GM10248 (cell line): ENCODE measurements at regions of chr7 and their contacts with region 1.

Region 1: GRCh38 chr7:21412410-21412851 is 15.5 kb upstream of the SP4 start:
- DNase-seq: peak; percentile 49
- CTCF ChIP-seq: no peak

Region 2: GRCh38 chr7:21400598-21400997 is 11.8 kb before region 1 on chr7:
- CTCF ChIA-PET with region 1: interaction called, 10 read pairs
- POLR2A ChIA-PET with region 1: no interaction called
- DNase-seq: no peak
- CTCF ChIP-seq: no peak

Region 3: DNA sequence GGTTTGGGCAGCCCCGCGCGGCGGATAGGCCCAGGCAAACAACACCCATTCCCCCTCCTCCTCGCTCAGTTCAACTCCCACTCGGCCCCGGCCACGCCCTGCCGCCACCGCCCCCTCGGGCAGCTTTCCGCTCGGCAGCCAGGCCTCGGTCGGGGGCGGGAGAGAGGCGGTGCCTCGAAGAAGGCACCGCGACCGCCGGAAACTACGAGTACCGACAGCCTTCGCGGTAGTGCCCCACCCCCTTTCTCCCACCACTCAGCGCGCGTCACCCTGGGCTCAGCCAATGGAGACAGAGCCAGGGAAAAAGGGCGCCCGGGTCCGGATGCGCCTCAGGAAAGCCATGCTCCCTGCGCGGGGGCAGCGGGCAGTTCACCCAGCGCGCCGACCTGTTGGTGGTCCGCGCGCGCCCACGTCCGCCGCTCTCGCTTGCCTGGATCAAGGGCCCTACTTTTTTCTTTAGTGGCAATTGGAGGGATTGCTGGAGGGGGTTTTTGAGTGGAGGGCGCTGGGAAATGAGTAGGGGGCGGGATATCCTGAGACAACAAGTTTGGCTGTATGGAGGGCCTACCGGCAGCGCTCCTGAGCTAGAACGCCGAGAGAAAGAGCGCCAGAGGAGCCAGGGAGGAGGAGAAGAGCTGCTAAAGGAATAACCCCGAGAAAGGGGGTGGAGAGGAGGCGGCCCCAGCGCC is 14.9 kb after region 1 on chr7:
- CTCF ChIA-PET with region 1: interaction called, 14 read pairs
- POLR2A ChIA-PET with region 1: no interaction called
- DNase-seq: peak; percentile 97
- CTCF ChIP-seq: no peak

Region 4: DNA sequence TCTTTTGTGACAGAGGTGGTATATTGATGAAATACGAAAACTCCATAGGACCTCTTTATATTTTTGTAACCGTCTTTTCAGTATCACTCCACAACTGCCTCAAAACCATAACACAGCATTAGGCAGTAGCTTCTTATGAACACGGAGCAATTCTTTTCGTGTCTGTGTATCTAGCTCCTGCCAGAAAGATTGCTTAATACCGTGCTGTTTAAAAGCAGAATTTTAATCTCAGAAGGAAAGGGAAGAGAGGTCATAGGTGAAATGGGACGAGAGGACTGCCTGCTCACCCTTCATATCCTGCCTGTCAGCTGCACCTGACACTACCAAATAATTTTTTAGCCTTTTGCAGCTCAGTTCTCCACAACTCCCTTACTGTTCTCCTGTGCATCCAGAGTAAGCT is 331.1 kb after region 1 on chr7:
- CTCF ChIA-PET with region 1: no interaction called
- POLR2A ChIA-PET with region 1: no interaction called
- DNase-seq: no peak
- CTCF ChIP-seq: no peak